Activated CD4-positive, alpha-beta T cell treated with anti-CD3 and anti-CD28 coated beads for 36 hours (primary cell): ENCODE measurements at regions of chr1 and their contacts with region 1.

Region 1: DNA sequence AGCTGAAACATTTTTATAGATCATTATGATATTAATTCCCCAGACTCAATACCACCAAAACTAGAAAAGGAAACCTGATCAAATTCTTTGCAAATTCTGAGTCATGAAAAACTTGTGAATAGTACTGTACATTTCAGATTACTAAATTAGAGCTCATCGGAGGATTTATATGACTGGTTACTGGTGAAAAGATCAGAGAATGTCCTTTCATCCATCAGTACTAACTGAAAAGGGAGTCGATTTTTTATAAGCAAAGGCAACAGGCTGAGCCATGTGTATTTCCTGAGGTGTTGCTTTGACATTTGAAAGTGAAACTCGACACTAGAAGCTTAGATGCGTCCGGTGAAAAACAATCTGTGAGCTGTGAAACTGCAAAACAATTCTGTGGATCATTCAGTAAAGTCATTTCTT is 155.7 kb downstream of the TNFSF18 start:
- DNase-seq: peak; percentile 35
- ATAC-seq: peak; percentile 84
- H3K4me3 Mint-ChIP-seq: peak overlapping the region; percentile 20
- H3K27ac Mint-ChIP-seq: peak overlapping the region; percentile 32
- H3K4me1 Mint-ChIP-seq: peaks cover 42% of the 10 kb centered on the region
- H3K27me3 Mint-ChIP-seq: peaks cover 29% of the 10 kb centered on the region

Region 2: DNA sequence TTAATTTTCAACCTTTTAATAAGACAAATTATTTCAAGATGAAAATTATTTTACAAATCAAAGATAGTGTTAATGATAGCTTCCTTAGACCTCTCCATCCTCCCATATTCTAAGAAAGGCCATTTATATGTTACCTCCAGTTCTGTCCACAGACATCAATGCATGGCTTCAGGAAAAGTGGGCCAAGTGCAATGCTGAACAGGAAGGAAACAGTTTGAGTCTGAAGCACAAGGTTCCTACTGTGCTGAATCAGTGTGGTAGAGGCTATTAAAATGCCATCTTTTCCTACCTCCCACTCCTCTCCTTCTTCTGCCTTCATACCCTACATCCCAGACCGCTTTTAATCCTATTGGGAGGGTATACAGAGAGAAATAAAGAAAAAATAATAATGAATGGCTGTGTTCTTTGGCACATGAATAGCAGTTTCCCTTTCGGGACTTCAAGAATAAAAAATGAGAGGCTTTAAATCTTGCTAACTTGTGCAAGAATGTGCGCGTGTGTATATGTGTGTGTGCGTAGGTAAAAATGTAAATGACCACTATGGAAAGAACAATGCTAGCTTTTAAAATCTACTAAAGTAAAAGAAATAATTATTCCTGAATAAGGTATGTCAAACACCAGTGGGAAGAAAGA is 537.2 kb before region 1 on chr1:
- CTCF ChIA-PET with region 1: no interaction called
- POLR2A ChIA-PET with region 1: no interaction called
- intact Hi-C with region 1: loop called in 1 of 2 experiments (anchors 10 kb)
- DNase-seq: no peak
- ATAC-seq: peak; percentile 6
- H3K4me3 Mint-ChIP-seq: peak overlapping the region; percentile 39
- H3K27ac Mint-ChIP-seq: peak overlapping the region; percentile 34
- H3K4me1 Mint-ChIP-seq: peaks cover 62% of the 10 kb centered on the region
- H3K27me3 Mint-ChIP-seq: peaks cover 2% of the 10 kb centered on the region

Region 3: DNA sequence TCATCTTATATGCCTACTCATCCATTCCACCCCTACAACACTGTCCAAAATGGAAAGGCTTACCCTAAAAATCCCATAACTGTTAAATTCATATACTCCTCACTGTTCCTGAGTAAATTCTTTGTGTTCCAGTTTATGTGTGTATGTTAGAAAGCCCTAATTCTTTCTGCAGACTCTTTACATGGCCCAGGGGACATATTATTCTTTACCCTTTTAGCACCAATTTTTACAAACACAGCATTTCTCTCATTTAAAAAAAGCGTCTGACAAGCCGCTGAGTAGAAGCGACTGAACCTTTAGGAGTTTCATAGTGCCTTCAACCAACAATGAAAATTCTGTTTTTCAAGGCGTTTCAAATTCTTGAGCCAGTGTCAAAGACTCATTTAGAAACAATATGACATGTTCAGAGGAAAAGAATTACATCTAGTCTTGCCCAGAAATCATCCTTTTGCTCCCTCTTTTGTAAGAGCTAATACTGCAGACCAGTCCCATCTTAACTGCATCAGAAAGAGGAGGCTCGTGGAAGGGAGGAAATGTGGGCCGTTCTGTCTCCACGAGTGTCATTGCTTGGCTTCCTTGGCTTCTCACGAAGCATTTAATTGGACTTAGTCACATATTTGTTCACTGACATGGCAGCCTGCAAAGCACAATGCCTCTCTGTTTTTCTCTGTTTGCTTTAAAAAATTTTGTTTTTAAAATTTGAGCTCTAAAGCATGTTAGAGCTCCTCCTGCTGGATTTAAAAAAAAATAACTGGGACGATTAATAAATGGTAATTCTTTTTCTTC is 495.9 kb before region 1 on chr1:
- CTCF ChIA-PET with region 1: no interaction called
- POLR2A ChIA-PET with region 1: no interaction called
- intact Hi-C with region 1: no loop called
- DNase-seq: peak; percentile 35
- ATAC-seq: peak; percentile 53
- H3K4me3 Mint-ChIP-seq: peak overlapping the region; percentile 29
- H3K27ac Mint-ChIP-seq: peak overlapping the region; percentile 70
- H3K4me1 Mint-ChIP-seq: peaks cover 74% of the 10 kb centered on the region
- H3K27me3 Mint-ChIP-seq: no peaks in the 10 kb centered on the region

Region 4: DNA sequence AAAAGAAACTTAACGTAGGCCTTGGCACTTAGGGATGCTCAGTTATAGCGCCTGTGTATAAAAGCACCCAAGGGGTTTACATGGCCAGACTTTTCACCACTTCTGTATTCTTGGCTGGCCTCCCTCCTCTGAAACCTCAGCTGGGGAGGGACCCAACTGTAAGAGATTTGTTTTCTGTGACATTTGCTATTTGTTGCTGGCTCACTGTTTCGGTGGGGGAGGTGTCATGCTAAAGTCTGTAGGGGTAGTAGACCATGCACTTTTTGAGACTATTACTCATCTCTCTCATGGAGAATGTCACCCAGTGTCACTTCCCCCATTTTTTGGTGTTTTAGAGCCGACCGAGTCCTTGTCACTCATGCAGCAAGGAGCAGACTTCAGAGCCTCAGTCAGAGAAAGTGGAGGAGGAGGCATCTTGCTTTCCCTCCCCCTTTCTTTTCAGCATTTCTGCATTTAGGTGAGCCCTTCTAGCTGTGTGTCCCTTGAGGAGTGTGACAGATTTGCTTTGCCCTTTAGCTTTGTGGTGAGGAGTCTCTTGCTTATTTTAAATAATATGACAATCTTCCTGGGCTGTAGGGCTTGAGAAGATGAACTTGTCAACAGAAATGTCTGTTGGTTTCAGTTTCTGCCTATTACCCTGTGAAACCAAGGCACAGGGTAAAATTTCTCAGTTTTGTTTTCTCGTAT is 76.1 kb before region 1 on chr1:
- CTCF ChIA-PET with region 1: interaction called, 4 read pairs
- POLR2A ChIA-PET with region 1: interaction called, 5 read pairs
- intact Hi-C with region 1: loop called in 1 of 2 experiments (anchors 1 kb)
- DNase-seq: peak; percentile 70
- ATAC-seq: peak; percentile 96
- H3K4me3 Mint-ChIP-seq: peak overlapping the region; percentile 3
- H3K27ac Mint-ChIP-seq: peak overlapping the region; percentile 38
- H3K4me1 Mint-ChIP-seq: peaks cover 33% of the 10 kb centered on the region
- H3K27me3 Mint-ChIP-seq: peaks cover 15% of the 10 kb centered on the region

Region 5: DNA sequence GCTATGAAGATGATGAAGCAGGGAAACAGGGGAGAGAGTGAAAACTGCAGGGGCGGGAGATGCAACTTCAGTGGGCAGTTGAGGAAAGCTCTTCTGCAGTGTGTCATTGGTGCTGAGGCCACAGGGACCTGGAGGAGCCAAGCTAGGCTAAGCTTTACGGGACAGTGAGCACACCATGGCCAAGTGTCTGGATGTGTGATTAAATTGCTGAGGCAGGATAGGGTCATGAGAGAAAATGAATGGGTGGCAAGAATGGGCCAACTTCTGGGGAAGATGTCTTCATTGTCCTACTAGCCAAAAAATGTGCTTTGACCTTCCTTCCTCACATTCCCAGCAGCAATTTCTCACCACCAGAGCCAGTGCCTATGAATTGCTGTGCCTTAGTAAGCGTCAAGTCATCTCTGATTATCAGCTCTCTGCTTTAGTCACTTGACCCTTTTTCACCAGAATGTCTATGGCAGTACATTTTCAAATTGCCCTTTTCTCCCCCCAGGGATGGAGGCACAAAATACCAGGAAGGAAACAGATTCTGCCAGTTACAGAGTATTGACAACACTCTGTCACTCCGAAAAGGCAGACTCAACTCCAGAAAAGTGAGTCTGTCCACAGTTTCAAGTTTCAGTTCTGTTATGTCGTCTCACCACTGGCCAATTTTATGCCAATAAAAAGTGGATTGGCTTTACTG is 11.8 kb before region 1 on chr1:
- CTCF ChIA-PET with region 1: interaction called, 4 read pairs
- POLR2A ChIA-PET with region 1: no interaction called
- intact Hi-C with region 1: loop called (anchors 1 kb)
- DNase-seq: peak; percentile 25
- ATAC-seq: peak; percentile 83
- H3K4me3 Mint-ChIP-seq: no peak overlapping the region
- H3K27ac Mint-ChIP-seq: peak overlapping the region; percentile 38
- H3K4me1 Mint-ChIP-seq: peaks cover 14% of the 10 kb centered on the region
- H3K27me3 Mint-ChIP-seq: peaks cover 45% of the 10 kb centered on the region

Region 6: DNA sequence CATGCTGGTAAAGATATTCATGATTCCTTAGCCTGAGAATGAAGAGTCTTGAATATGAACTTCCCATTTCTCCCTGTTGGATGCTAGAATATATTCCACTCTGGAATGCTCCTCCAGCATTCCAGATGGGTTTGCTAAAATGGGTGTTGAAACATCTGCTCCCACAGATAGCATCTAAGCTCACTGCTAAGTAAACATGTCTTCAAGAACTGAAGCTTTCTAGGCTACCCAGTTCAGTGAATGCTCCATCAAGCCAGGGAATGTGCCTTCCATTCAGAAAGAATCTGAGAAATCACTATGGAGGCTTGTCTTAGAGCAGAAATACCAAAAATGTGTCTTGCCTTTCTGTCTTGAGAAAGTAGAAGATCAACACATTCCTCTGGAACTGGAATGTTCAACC is 74.6 kb after region 1 on chr1:
- CTCF ChIA-PET with region 1: no interaction called
- POLR2A ChIA-PET with region 1: interaction called, 5 read pairs
- intact Hi-C with region 1: loop called (anchors 1 to 5 kb)
- DNase-seq: no peak
- ATAC-seq: no peak
- H3K4me3 Mint-ChIP-seq: no peak overlapping the region
- H3K27ac Mint-ChIP-seq: no peak overlapping the region
- H3K4me1 Mint-ChIP-seq: peaks cover 17% of the 10 kb centered on the region
- H3K27me3 Mint-ChIP-seq: no peaks in the 10 kb centered on the region

Region 7: GRCh38 chr1:174159252-174160108 is 1264.4 kb after region 1 on chr1 and contains the start of gene RABGAP1L:
- CTCF ChIA-PET with region 1: no interaction called
- POLR2A ChIA-PET with region 1: no interaction called
- intact Hi-C with region 1: loop called in 1 of 2 experiments (anchors 10 kb)
- DNase-seq: peak; percentile 97
- ATAC-seq: peak; percentile 83
- H3K4me3 Mint-ChIP-seq: peak within 1 kb of the TSS; percentile 93
- H3K27ac Mint-ChIP-seq: peak within 1 kb of the TSS; percentile 95
- H3K4me1 Mint-ChIP-seq: peaks cover 59% of the 10 kb centered on the region
- H3K27me3 Mint-ChIP-seq: no peaks in the 10 kb centered on the region
- total RNA-seq, gene RABGAP1L: 22.6 to 29.9 TPM